AG04449 (cell line): ENCODE measurements at regions of chr20 and their contacts with region 1.

Region 1: DNA sequence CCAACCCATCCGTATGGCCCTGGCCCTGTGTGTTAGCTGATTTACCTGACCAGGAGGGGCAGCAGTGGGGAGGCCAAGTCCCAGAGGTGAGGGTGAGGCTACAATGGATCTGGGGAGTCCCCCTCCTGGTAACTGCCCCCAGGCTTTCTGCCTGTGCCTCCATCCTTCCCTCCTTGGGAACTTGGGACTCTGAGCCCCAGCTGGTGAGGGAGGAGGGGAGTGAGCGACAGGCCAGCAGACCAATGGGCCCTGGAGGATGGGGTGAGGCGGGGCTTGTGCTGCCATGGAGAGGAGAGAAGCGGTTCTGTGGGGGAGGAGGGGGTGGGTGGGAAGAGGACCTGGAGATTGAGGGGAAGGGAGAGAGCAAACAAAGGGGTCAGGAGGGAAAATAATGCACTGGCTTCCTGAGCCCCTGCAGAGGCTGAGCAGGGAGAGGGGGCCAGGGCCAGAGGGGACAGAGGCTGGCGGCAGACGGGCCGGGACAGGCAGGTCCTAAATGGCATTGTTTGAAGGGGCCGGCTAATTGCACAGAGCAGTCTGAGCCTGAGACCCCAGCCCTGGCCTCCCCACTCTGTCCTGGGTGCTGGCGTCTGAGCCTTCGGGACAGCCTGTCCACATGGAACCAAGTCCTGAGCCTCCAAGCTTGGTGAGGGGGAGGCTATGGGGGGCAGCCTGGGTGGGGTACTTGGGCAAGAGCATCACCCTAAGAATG is 17.5 kb downstream of the DNMT3B start:
- DNase-seq: no peak
- H3K4me3 ChIP-seq: no peak overlapping the region
- CTCF ChIP-seq: no peak

Region 2: DNA sequence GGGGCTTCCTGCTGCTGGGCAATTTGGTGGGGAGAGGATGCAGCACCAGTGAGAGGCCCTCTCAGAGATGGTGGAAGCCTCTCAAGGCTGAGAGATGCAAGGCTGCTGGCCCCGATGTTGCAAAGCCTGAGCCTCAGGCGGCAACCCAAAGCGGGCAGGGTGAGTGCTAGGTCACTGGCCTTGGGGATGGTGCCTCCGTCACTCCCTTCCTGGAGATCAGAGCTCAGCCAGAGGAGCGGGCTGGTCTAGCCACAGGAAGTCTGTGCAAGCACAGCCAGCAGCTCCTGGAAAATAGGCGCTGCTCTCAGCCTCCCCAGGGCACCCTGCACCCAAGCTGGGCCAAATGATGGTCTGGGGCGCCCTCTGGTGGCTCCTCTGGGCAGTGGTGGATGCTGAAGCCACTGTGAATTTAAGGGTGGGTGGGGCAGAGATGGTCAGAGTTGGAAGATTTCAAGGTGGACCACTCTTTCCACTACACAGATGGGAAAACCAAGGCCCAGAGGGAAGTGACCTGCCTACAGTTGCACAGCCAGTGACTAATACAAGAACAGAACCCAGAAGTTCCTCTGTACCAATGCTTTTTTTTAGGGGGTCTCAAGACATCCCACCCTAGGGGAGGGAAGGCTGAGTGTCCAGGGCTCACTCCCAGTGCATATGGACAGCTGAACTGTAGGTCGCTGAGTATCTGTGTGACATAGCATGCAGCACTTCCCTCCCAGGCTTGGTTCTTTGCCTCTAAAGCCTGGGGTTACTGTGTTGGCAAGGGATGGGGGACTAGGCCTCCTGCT is 126.7 kb before region 1 on chr20:
- CTCF ChIA-PET with region 1: interaction called, 15 read pairs
- POLR2A ChIA-PET with region 1: no interaction called
- DNase-seq: peak; percentile 14
- H3K4me3 ChIP-seq: no peak overlapping the region
- CTCF ChIP-seq: peak; percentile 95

Region 3: DNA sequence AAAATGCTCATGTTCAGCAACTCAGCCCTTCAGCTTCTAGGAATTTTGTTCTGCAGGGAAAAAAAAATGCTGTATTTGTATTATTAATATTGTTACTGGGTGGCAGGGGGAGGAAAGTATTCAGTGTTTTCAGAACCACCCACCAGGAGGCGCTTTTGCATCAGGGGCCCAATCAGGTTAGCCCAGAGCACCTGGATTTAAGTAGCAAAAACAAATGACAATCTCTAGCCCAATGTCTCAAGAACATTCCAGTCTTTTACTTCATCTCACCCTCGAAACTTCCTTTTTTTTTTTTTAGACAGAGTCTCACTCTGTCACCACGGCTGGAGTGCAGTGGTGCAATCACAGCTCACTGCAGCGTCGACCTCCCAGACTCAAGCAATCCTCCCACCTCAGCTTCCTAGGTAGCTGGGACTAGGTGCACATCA is 105.3 kb before region 1 on chr20:
- CTCF ChIA-PET with region 1: interaction called, 437 read pairs
- POLR2A ChIA-PET with region 1: no interaction called
- DNase-seq: no peak
- H3K4me3 ChIP-seq: no peak overlapping the region
- CTCF ChIP-seq: peak; percentile 67

Region 4: GRCh38 chr20:32709632-32710121 is 70.0 kb before region 1 on chr20:
- CTCF ChIA-PET with region 1: interaction called, 15 read pairs
- POLR2A ChIA-PET with region 1: no interaction called
- DNase-seq: no peak
- H3K4me3 ChIP-seq: no peak overlapping the region
- CTCF ChIP-seq: no peak

Region 5: DNA sequence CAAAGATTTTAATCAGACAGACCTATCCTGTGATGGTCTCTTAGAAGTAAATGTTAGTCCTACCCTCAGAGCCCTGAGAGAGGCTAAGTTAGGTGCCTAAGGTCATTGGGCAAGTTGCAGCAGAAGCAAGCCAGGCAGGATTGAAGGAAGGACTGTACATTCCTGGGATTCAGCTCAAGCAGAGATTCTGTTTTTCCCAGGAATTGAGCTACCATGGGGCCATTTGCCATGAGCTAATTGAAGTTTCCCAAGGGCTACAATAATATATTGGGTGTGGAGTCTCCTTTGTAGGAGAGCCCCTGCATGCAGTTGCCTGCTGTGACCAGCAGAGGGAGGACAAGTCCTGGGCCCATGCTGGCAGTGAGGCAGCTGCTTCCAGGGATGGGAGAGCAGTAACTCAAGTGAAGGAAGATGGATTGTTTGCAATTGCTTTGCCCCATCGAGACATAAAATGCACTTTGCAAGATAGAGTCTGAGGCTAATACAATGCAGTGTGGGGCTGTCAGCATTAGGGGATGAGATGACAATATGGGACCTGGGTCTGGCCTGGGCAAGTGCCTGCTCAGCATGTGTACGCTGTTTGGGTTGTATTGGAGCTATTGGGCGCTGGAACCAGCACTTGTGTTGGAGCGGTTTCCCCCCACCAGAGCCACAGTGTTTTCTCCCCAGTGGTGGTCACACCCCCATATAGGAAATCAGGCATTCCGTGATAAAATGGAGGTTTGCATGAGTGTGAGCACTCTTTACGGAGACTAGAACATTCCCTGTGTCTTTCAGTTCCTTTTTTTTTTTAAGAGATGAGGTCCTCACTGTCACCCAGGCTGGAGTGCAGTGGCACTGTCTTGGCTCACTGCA is 10.5 kb after region 1 on chr20:
- CTCF ChIA-PET with region 1: interaction called, 90 read pairs
- POLR2A ChIA-PET with region 1: no interaction called
- DNase-seq: peak; percentile 16
- H3K4me3 ChIP-seq: no peak overlapping the region
- CTCF ChIP-seq: peak; percentile 97

Region 6: DNA sequence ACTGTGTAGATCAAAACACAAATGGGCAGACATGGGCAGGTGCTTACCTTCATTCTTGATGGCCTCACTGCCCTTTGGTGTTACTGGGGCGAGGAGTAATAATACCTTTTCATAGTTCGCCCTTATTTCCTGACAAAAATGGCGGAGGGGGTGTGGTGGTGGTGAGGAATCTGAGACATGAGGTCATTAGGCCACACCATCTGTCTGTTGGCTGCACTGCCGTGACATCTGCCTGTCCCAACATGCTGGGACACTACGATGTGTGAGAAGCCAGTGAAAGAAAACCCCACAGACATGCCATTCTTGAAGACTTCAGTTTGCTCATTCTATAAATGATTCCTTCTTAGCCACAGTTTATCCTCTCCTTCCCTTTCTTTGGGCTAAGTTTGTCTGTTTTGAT is 26.7 kb after region 1 on chr20:
- CTCF ChIA-PET with region 1: interaction called, 18 read pairs
- POLR2A ChIA-PET with region 1: no interaction called
- DNase-seq: no peak
- H3K4me3 ChIP-seq: no peak overlapping the region
- CTCF ChIP-seq: no peak